ENCODE measurements at regions of chr5 and their contacts with region 1.

Region 1: GRCh38 chr5:157354800-157355199 is 88.9 kb downstream of the CYFIP2 start:
- DNase-seq: no peak
- H3K4me3 Mint-ChIP-seq: no peak overlapping the region
- H3K27ac Mint-ChIP-seq: no peak overlapping the region
- H3K4me1 Mint-ChIP-seq: peaks cover 36% of the 10 kb centered on the region
- H3K27me3 Mint-ChIP-seq: no peaks in the 10 kb centered on the region

Region 2: DNA sequence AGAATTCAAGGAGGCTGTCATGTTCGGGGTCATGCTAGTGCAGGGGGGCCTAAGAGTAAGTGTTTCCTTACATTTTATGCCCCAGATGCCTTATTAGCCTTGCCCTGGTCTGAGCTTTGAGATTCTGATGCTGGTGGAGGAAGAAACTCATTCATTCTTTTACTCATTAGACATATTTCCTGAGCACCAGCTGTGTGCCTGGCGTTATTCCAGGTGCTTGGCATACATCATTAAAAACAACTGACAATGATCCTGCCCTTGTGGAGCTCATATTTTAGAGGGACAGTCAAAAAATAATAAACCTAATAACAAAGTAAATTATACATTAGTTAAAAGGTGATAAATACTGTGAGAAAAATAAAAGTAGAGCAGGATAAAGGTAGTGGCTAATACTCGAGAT is 1166.8 kb before region 1 on chr5:
- CTCF ChIA-PET with region 1: no interaction called
- intact Hi-C with region 1: no loop called
- DNase-seq: no peak
- H3K4me3 Mint-ChIP-seq: no peak overlapping the region
- H3K27ac Mint-ChIP-seq: no peak overlapping the region
- H3K4me1 Mint-ChIP-seq: no peaks in the 10 kb centered on the region
- H3K27me3 Mint-ChIP-seq: no peaks in the 10 kb centered on the region

Region 3: DNA sequence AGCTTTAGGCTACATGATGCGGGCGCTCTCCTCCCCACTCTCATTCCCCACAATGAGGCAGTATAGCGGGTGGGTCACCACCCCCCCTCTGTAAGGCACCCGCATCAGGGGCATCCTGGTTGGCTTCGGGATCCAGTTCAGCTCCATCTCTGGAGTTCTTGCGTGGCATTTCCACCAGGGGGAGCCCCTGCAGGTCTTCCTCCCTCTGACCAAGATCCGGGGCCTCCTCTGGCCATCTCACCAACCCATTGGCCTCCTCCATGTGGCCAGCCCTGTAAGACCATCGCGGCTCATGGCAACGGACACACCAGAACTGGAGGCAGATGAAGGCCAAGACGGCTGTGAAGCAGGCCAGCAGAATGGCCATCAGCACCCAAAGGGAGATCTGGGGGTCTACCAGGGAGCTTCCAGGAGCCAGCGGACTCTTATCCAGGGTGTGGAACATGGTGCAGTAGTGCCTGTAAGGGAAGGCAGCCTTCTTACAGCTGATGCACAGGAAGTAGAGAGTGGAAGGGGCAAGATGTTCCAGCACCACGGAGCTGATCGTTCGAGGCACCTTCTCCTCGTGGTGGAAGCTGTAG is 11.9 kb before region 1 on chr5:
- CTCF ChIA-PET with region 1: interaction called, 26 read pairs
- intact Hi-C with region 1: no loop called
- DNase-seq: peak; percentile 51
- H3K4me3 Mint-ChIP-seq: no peak overlapping the region
- H3K27ac Mint-ChIP-seq: no peak overlapping the region
- H3K4me1 Mint-ChIP-seq: peaks cover 38% of the 10 kb centered on the region
- H3K27me3 Mint-ChIP-seq: no peaks in the 10 kb centered on the region

Region 4: GRCh38 chr5:157390551-157391297 is 35.9 kb after region 1 on chr5:
- CTCF ChIA-PET with region 1: interaction called, 3 read pairs
- intact Hi-C with region 1: loop called (anchors 2 kb)
- DNase-seq: peak; percentile 84
- H3K4me3 Mint-ChIP-seq: no peak overlapping the region
- H3K27ac Mint-ChIP-seq: peak overlapping the region; percentile 92
- H3K4me1 Mint-ChIP-seq: peaks cover 18% of the 10 kb centered on the region
- H3K27me3 Mint-ChIP-seq: no peaks in the 10 kb centered on the region

Region 5: GRCh38 chr5:157540707-157541446 is 186.1 kb after region 1 on chr5:
- CTCF ChIA-PET with region 1: no interaction called
- intact Hi-C with region 1: loop called (anchors 2 kb)
- DNase-seq: peak; percentile 63
- H3K4me3 Mint-ChIP-seq: peak overlapping the region; percentile 8
- H3K27ac Mint-ChIP-seq: peak overlapping the region; percentile 66
- H3K4me1 Mint-ChIP-seq: peaks cover 50% of the 10 kb centered on the region
- H3K27me3 Mint-ChIP-seq: no peaks in the 10 kb centered on the region

Region 6: DNA sequence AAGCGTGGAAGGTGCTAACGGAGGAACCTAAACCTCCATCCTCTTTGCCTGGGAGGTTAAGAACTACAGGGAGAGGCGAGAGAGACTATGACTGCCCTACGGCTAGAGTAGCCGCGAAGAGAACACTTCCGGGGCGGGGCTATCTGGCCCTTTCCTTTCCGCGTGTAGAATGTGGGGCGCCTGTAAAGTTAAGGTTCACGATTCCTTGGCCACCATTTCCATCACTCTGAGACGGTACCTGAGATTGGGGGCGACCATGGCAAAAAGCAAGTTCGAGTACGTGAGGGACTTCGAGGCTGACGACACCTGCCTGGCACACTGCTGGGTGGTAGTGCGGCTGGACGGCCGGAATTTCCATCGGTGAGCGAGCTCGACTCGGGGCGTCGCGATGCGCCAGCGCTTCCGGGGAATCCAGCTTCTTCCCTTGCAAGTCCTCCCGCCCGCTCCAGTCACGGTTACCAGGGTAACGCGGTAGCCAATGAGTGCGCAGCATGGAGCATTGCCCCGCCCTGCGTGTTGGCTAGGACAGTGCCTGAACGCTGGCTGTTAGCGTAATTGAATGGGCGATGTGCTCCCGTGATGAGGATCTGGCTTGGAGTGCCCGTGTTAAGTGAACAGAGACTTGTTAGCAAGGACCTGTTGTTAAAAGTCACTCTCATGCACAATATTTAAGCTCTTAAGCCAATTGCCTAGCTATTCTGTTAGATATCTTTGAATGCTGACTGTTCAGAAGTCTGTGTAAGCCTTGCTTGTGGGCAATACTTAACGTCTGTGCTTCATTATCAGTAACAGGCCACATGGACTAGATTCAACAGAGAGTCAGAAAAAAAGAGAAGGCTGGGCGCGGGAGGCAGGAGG is 376.7 kb after region 1 on chr5 and contains the start of gene THG1L:
- CTCF ChIA-PET with region 1: no interaction called
- intact Hi-C with region 1: loop called (anchors 1 kb)
- DNase-seq: peak; percentile 100
- H3K4me3 Mint-ChIP-seq: peak within 1 kb of the TSS; percentile 97
- H3K27ac Mint-ChIP-seq: peak within 1 kb of the TSS; percentile 95
- H3K4me1 Mint-ChIP-seq: peaks cover 25% of the 10 kb centered on the region
- H3K27me3 Mint-ChIP-seq: no peaks in the 10 kb centered on the region
- total RNA-seq, gene THG1L: 28.1 to 30.2 TPM